CD8-positive, alpha-beta T cell (primary cell): ENCODE measurements at regions of chr11 and their contacts with region 1.

Region 1: DNA sequence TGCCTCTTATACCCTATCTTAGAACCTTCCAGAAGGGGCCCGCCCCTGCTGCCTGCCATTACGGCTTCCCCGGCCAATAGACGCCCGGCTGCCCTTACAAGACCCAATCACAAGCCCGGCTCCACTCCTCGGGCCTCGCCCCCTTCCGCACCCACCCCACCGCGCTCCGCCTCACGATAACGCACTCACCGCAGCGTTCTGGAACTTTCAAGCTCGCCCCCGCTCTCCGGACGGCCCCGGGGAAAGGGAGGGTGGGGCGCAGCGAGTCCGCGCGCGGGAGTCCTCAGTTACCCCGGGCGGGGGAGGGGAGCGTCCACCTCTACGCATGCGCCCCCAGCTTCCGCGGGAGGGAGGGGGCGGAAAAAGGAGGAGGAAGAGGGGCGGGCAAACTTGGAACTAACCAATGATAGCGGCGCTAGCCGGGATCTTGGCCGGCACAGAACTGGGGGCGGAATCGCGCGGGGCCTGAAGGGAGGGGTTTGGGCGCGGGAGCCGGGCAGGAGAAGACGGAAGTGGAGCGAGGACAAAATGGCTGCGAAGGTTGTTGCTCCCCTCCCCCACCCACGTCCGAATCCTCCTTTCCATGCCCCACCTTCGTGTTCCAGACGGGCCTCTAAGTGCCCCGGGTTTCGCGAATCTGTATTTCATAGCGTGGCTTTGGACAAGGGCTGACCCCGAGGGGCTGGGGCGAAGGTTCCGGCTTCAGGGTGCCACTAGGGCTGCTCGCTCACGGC is 389 bp upstream of the HSPA8 start:
- DNase-seq: peak; percentile 98 to 100 (median 99)
- ATAC-seq: peak; percentile 81
- H3K4me3 ChIP-seq: peak overlapping the region; percentile 78 to 97
- H3K4me3 Mint-ChIP-seq: peak overlapping the region; percentile 97
- H3K27ac ChIP-seq: peak overlapping the region; percentile 87 to 98
- H3K27ac Mint-ChIP-seq: peak overlapping the region; percentile 97
- H3K4me1 ChIP-seq: peaks cover 49% of the 10 kb centered on the region
- H3K4me1 Mint-ChIP-seq: peaks cover 63% of the 10 kb centered on the region
- H3K27me3 ChIP-seq: no peaks in the 10 kb centered on the region
- H3K27me3 Mint-ChIP-seq: no peaks in the 10 kb centered on the region
- CTCF ChIP-seq: no peak

Region 2: GRCh38 chr11:121292495-121293287 is 1769.6 kb before region 1 on chr11 and contains the start of gene SC5D:
- CTCF ChIA-PET with region 1: no interaction called
- POLR2A ChIA-PET with region 1: interaction called, 3 read pairs
- intact Hi-C with region 1: loop called (anchors 5 to 10 kb)
- DNase-seq: peak; percentile 86 to 98 (median 95)
- ATAC-seq: peak; percentile 83
- H3K4me3 ChIP-seq: peak within 1 kb of the TSS; percentile 77 to 79
- H3K4me3 Mint-ChIP-seq: peak within 1 kb of the TSS; percentile 97
- H3K27ac ChIP-seq: peak within 1 kb of the TSS; percentile 94 to 97
- H3K27ac Mint-ChIP-seq: peak within 1 kb of the TSS; percentile 99
- H3K4me1 ChIP-seq: peaks cover 14% of the 10 kb centered on the region
- H3K4me1 Mint-ChIP-seq: peaks cover 58% of the 10 kb centered on the region
- H3K27me3 ChIP-seq: no peaks in the 10 kb centered on the region
- H3K27me3 Mint-ChIP-seq: no peaks in the 10 kb centered on the region
- CTCF ChIP-seq: no peak
- total RNA-seq, gene SC5D: 69.2 to 70.1 TPM

Region 3: GRCh38 chr11:122743949-122744348 is 318.4 kb before region 1 on chr11:
- CTCF ChIA-PET with region 1: no interaction called
- POLR2A ChIA-PET with region 1: interaction called, 3 read pairs
- intact Hi-C with region 1: loop called in 1 of 2 experiments (anchors 5 kb)
- DNase-seq: peak; percentile 19 to 86 (median 73)
- ATAC-seq: peak; percentile 46
- H3K4me3 ChIP-seq: peak overlapping the region; percentile 24 to 40
- H3K4me3 Mint-ChIP-seq: no peak overlapping the region
- H3K27ac ChIP-seq: peak overlapping the region; percentile 46 to 70
- H3K27ac Mint-ChIP-seq: no peak overlapping the region
- H3K4me1 ChIP-seq: peaks cover 71% of the 10 kb centered on the region
- H3K4me1 Mint-ChIP-seq: peaks cover 15% of the 10 kb centered on the region
- H3K27me3 ChIP-seq: no peaks in the 10 kb centered on the region
- H3K27me3 Mint-ChIP-seq: no peaks in the 10 kb centered on the region
- CTCF ChIP-seq: no peak

Region 4: GRCh38 chr11:122882857-122883645 is 179.3 kb before region 1 on chr11:
- CTCF ChIA-PET with region 1: no interaction called
- POLR2A ChIA-PET with region 1: interaction called, 10 read pairs
- intact Hi-C with region 1: no loop called
- DNase-seq: peak; percentile 13 to 72 (median 52)
- ATAC-seq: peak; percentile 79
- H3K4me3 ChIP-seq: peak overlapping the region; percentile 71 to 83
- H3K4me3 Mint-ChIP-seq: peak overlapping the region; percentile 85
- H3K27ac ChIP-seq: peak overlapping the region; percentile 64 to 90
- H3K27ac Mint-ChIP-seq: peak overlapping the region; percentile 87
- H3K4me1 ChIP-seq: peaks cover 12% of the 10 kb centered on the region
- H3K4me1 Mint-ChIP-seq: peaks cover 24% of the 10 kb centered on the region
- H3K27me3 ChIP-seq: no peaks in the 10 kb centered on the region
- H3K27me3 Mint-ChIP-seq: no peaks in the 10 kb centered on the region
- CTCF ChIP-seq: no peak

Region 5: GRCh38 chr11:123103326-123103980 is 41.1 kb after region 1 on chr11:
- CTCF ChIA-PET with region 1: interaction called, 123 read pairs
- POLR2A ChIA-PET with region 1: interaction called, 46 read pairs
- intact Hi-C with region 1: loop called in 1 of 2 experiments (anchors 2 kb)
- DNase-seq: peak in 7 of 9 experiments; percentile 16 to 68 (median 38)
- ATAC-seq: peak; percentile 66
- H3K4me3 ChIP-seq: no peak overlapping the region
- H3K4me3 Mint-ChIP-seq: no peak overlapping the region
- H3K27ac ChIP-seq: no peak overlapping the region
- H3K27ac Mint-ChIP-seq: no peak overlapping the region
- H3K4me1 ChIP-seq: peaks cover 14% of the 10 kb centered on the region
- H3K4me1 Mint-ChIP-seq: peaks cover 27% of the 10 kb centered on the region
- H3K27me3 ChIP-seq: no peaks in the 10 kb centered on the region
- H3K27me3 Mint-ChIP-seq: no peaks in the 10 kb centered on the region
- CTCF ChIP-seq: peak; percentile 58

Region 6: GRCh38 chr11:123429913-123430720 is 367.8 kb after region 1 on chr11 and contains the start of gene GRAMD1B:
- CTCF ChIA-PET with region 1: no interaction called
- POLR2A ChIA-PET with region 1: no interaction called
- intact Hi-C with region 1: loop called in 1 of 2 experiments (anchors 10 kb)
- DNase-seq: peak; percentile 48 to 86 (median 74)
- ATAC-seq: peak; percentile 86
- H3K4me3 ChIP-seq: peak within 1 kb of the TSS; percentile 61 to 70
- H3K4me3 Mint-ChIP-seq: peak within 1 kb of the TSS; percentile 91
- H3K27ac ChIP-seq: peak within 1 kb of the TSS; percentile 53 to 54
- H3K27ac Mint-ChIP-seq: peak within 1 kb of the TSS; percentile 92
- H3K4me1 ChIP-seq: peaks cover 14% of the 10 kb centered on the region
- H3K4me1 Mint-ChIP-seq: peaks cover 22% of the 10 kb centered on the region
- H3K27me3 ChIP-seq: no peaks in the 10 kb centered on the region
- H3K27me3 Mint-ChIP-seq: no peaks in the 10 kb centered on the region
- CTCF ChIP-seq: peak; percentile 18
- total RNA-seq, gene GRAMD1B: 18.6 to 20.7 TPM